Right ventricle myocardium inferior (tissue), 1 donor: ENCODE measurements at regions of chr1 and their contacts with region 1.

Region 1: GRCh38 chr1:207084701-207085180 is 3.9 kb upstream of the C4BPB start:
- DNase-seq: no peak
- ATAC-seq: no peak

Region 2: GRCh38 chr1:206856674-206857464 is 227.9 kb before region 1 on chr1:
- intact Hi-C with region 1: no loop called
- DNase-seq: no peak
- ATAC-seq: no peak

Region 3: GRCh38 chr1:207500306-207500705 is 415.6 kb after region 1 on chr1:
- intact Hi-C with region 1: loop called (anchors 5 kb)
- DNase-seq: no peak
- ATAC-seq: no peak